ENCODE measurements at regions of chr6 and their contacts with region 1.

Region 1: GRCh38 chr6:127516666-127517273 is 2.4 kb downstream of the MTCL3 start:
- DNase-seq: peak; percentile 63
- ATAC-seq: peak; percentile 51
- H3K4me3 Mint-ChIP-seq: peak overlapping the region; percentile 85
- H3K27ac Mint-ChIP-seq: peak overlapping the region; percentile 63
- H3K4me1 Mint-ChIP-seq: peaks cover 44% of the 10 kb centered on the region
- H3K27me3 Mint-ChIP-seq: peaks cover 38% of the 10 kb centered on the region

Region 2: GRCh38 chr6:127266178-127266891 is 250.4 kb before region 1 on chr6 and contains the start of gene RNF146:
- CTCF ChIA-PET with region 1: interaction called, 22 read pairs
- POLR2A ChIA-PET with region 1: interaction called, 9 read pairs
- DNase-seq: peak; percentile 77
- ATAC-seq: peak; percentile 85
- H3K4me3 Mint-ChIP-seq: peak within 1 kb of the TSS; percentile 96
- H3K27ac Mint-ChIP-seq: peak within 1 kb of the TSS; percentile 100
- H3K4me1 Mint-ChIP-seq: peaks cover 33% of the 10 kb centered on the region
- H3K27me3 Mint-ChIP-seq: peaks cover 6% of the 10 kb centered on the region
- total RNA-seq, gene RNF146: 14.7 to 18.0 TPM

Region 3: DNA sequence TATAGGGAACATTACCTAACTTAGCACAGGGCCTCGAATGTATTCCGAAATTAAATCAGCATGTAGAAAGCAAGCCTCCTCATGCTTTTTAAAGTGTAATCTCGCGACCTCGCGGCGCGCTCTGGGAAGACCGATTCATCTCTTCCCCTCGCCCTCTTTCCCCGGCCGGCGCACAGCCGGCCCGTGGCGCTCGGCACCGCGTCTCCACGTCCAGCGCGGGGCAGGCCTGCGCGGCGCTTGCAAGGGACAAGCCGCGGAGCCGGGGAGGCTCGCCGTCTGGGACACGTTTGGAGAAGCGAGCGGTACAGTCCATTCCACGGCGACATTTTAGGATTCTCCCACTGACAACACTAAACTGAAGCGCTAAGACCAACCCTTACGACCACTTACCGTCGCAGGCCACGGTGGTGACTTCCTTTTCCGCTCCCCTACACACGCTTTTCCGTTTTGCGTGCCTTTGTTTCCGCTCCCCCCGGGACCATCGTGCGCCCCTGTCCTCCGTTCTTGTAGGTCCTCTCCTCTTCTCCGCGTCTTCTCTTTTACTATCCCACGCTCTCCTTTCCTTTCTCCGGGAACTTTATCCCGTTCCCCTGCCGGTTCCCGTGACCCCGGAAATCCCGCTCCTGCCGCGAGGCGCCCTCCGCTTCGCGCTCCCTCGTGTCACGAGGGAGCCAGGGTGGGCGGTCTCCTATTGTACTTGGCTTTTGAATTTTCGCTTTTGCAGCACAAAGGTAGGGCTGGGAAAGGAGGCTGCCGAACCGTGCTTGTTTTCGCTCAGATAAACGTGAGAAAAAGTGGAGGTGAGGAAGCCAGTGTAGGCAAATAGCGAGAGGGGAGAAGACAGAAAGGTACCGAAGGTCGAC is 173.6 kb before region 1 on chr6 and contains the start of gene ECHDC1:
- CTCF ChIA-PET with region 1: interaction called, 12 read pairs
- POLR2A ChIA-PET with region 1: interaction called, 6 read pairs
- DNase-seq: peak; percentile 85
- ATAC-seq: peak; percentile 90
- H3K4me3 Mint-ChIP-seq: no peak within 1 kb of the TSS
- H3K27ac Mint-ChIP-seq: no peak within 1 kb of the TSS
- H3K4me1 Mint-ChIP-seq: no peaks in the 10 kb centered on the region
- H3K27me3 Mint-ChIP-seq: no peaks in the 10 kb centered on the region
- total RNA-seq, gene ECHDC1: 44.0 to 47.1 TPM

Region 4: GRCh38 chr6:127464881-127465459 is 51.8 kb before region 1 on chr6:
- CTCF ChIA-PET with region 1: interaction called, 37 read pairs
- POLR2A ChIA-PET with region 1: no interaction called
- DNase-seq: peak; percentile 76
- ATAC-seq: peak; percentile 83
- H3K4me3 Mint-ChIP-seq: no peak overlapping the region
- H3K27ac Mint-ChIP-seq: no peak overlapping the region
- H3K4me1 Mint-ChIP-seq: peaks cover 13% of the 10 kb centered on the region
- H3K27me3 Mint-ChIP-seq: no peaks in the 10 kb centered on the region

Region 5: GRCh38 chr6:127496471-127496870 is 20.3 kb before region 1 on chr6:
- CTCF ChIA-PET with region 1: interaction called, 62 read pairs
- POLR2A ChIA-PET with region 1: interaction called, 3 read pairs
- DNase-seq: no peak
- ATAC-seq: no peak
- H3K4me3 Mint-ChIP-seq: no peak overlapping the region
- H3K27ac Mint-ChIP-seq: no peak overlapping the region
- H3K4me1 Mint-ChIP-seq: peaks cover 10% of the 10 kb centered on the region
- H3K27me3 Mint-ChIP-seq: peaks cover 6% of the 10 kb centered on the region

Region 6: DNA sequence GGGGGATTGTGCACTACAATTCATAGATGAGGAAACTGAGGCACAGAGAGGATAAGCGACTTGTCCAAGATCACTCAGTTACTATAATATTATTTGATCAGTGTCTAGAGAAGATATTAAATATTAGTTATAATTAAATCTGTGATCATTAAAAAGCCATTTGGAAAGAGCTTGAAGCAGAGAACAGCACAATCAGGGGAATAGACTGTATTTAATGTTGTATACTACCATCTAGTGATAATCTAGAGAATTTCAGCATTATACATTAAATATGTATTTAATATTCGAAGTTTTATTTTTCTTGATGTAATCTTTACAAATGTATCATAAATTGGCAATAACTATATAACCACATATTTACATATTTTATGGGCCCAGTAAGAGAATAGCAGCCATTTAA is 22.5 kb after region 1 on chr6:
- CTCF ChIA-PET with region 1: interaction called, 31 read pairs
- POLR2A ChIA-PET with region 1: interaction called, 5 read pairs
- DNase-seq: no peak
- ATAC-seq: peak; percentile 60
- H3K4me3 Mint-ChIP-seq: no peak overlapping the region
- H3K27ac Mint-ChIP-seq: no peak overlapping the region
- H3K4me1 Mint-ChIP-seq: peaks cover 3% of the 10 kb centered on the region
- H3K27me3 Mint-ChIP-seq: peaks cover 20% of the 10 kb centered on the region